Left cardiac atrium (tissue), 4 donors: ENCODE measurements at regions of chr22 and their contacts with region 1.

Region 1: DNA sequence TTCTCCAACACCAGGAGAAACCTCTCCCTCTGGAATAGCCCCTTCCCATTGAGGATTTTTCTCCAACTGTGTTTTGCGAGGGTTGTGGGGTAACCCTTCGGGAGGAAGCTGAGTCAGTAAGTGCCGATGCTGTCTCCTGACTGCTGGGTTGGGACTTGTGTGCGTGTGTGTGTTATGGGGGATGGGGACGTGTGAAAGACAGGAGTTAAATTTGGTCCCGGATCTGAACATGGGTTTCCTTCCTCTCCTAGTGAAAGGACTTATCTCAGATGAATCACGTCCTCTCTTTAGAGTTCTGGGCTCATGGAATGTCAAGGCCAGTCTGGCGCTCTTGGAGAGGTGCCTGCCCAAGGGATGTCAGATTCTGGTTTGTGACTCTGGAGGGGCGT is 33.3 kb downstream of the KIAA1671 start:
- DNase-seq: peak; percentile 78
- ATAC-seq: peak; percentile 74 to 86

Region 2: DNA sequence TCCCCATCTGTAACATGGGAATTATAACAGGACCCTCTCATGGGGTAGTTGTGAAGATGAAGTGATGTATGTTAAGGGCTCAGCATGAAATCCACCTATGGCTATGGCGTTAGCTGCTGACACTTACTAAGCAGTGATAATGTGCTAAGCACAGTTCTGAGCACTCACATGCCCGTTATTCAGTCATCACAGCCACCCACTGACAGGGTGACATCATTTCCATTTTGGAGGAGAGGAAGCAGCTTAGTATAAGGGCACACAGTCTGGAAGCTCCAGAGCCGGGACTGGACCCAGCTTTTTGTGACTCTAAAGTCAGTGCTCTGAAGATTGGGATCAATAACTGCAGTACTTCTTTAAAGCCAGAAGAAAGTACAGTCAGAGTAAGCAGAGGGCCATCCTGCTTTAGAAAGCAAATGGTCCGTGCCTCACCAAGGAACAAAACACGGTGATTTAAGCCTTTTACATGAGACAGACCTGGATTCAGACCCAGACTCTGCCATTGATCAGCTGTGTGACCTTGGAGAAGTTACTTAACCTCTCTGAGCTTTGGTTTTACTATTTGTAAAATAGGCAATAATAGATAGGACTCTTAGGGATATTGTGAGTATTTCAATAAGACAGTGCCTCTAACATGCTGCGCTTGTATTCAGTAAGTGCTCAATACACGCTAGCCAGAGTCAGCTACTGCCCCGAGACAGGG is 118.3 kb before region 1 on chr22:
- intact Hi-C with region 1: no loop called
- DNase-seq: no peak
- ATAC-seq: peak in 1 of 2 donors; percentile 91

Region 3: DNA sequence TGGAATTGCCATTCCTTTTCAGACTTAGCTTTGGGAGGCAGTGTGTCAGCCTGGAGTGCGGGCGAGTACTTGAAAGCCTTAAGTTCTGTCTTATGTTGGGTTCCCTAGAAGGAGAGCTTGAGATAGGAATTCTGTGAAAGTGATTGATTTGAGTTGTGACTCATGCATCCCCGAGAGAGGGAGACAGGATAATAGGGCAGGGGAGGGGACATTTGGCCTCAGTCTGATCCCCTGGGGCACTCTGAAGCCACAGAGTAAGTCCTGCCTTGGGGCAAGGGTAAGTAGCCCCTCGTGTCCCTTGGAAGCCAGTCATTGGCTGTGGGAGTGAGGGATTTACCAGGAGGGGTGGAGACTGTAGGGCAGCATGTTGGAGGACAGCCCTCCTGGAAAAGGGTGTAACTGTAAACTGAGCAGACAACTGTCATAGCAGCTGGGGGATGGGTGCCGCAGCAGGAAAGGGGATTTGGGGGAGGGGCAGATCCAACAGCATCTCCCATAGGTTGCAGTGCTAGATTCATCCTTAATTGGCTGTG is 10.7 kb after region 1 on chr22:
- intact Hi-C with region 1: loop called in 1 of 2 experiments (anchors 1 kb)
- DNase-seq: peak; percentile 44
- ATAC-seq: peak; percentile 80 to 87